A673 (cell line): ENCODE measurements at regions of chr17 and their contacts with region 1.

Region 1: DNA sequence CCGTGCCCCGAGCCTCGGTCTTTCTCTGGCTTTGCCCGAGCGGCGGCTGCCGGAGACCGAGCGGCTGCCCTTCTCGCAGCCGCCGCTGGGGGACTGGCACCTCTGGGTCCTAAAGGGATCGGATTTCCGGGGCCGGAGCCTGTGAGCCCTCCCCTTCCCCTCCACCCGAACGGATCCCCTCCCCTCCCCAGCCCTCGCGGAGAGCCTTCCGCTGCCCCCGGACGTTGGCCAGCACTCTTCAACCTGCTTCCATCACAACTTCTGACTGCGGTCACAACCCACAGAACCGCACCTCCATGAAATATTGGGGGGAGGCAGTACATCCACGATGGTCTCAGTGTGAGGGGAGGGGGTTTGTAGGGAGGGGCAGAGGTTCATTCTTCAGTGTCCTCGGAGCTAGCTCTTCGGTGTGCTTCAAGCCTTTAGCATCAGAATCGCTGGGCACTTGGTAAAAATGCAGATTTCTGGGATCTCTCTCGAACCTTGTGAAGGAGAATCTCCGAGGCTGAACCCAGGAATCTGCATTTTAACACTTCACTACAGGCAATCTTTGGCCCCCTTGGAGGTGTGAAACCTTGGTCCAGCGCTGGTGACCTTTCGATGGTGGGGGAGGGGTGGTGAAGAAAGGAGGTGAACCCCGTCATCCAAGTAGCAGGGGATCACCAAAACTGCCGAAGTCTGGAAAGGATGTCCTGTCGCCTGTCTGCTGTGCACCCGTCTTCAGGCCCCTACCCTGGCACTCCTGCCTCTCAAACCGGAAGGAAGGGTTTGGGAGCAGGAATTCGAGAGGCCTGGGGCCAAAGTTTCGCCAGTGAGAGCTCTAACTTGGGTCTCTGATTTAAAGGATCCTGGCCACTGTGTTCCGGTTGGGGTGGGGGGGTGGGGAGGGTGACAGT is 812 bp upstream of the PPP1R9B start:
- DNase-seq: peak; percentile 95
- H3K4me3 ChIP-seq: peak overlapping the region; percentile 82
- H3K27ac ChIP-seq: peak overlapping the region; percentile 86
- H3K4me1 ChIP-seq: peaks cover 40% of the 10 kb centered on the region
- H3K27me3 ChIP-seq: no peaks in the 10 kb centered on the region
- CTCF ChIP-seq: peak; percentile 56

Region 2: GRCh38 chr17:48985436-48986245 is 1165.6 kb before region 1 on chr17:
- CTCF ChIA-PET with region 1: no interaction called
- POLR2A ChIA-PET with region 1: interaction called, 10 read pairs
- intact Hi-C with region 1: no loop called
- DNase-seq: no peak
- H3K4me3 ChIP-seq: no peak overlapping the region
- H3K27ac ChIP-seq: peak overlapping the region; percentile 34
- H3K4me1 ChIP-seq: peaks cover 42% of the 10 kb centered on the region
- H3K27me3 ChIP-seq: no peaks in the 10 kb centered on the region
- CTCF ChIP-seq: no peak

Region 3: GRCh38 chr17:50114849-50115357 is 36.4 kb before region 1 on chr17:
- CTCF ChIA-PET with region 1: interaction called, 4 read pairs
- POLR2A ChIA-PET with region 1: interaction called, 11 read pairs
- intact Hi-C with region 1: no loop called
- DNase-seq: peak; percentile 87
- H3K4me3 ChIP-seq: no peak overlapping the region
- H3K27ac ChIP-seq: peak overlapping the region; percentile 33
- H3K4me1 ChIP-seq: peaks cover 16% of the 10 kb centered on the region
- H3K27me3 ChIP-seq: no peaks in the 10 kb centered on the region
- CTCF ChIP-seq: peak; percentile 91

Region 4: GRCh38 chr17:50331085-50331791 is 179.9 kb after region 1 on chr17:
- CTCF ChIA-PET with region 1: no interaction called
- POLR2A ChIA-PET with region 1: no interaction called
- intact Hi-C with region 1: no loop called
- DNase-seq: no peak
- H3K4me3 ChIP-seq: no peak overlapping the region
- H3K27ac ChIP-seq: no peak overlapping the region
- H3K4me1 ChIP-seq: peaks cover 8% of the 10 kb centered on the region
- H3K27me3 ChIP-seq: no peaks in the 10 kb centered on the region
- CTCF ChIP-seq: no peak